ACHN (cell line): ENCODE measurements at regions of chr10 and their contacts with region 1.

Region 1: DNA sequence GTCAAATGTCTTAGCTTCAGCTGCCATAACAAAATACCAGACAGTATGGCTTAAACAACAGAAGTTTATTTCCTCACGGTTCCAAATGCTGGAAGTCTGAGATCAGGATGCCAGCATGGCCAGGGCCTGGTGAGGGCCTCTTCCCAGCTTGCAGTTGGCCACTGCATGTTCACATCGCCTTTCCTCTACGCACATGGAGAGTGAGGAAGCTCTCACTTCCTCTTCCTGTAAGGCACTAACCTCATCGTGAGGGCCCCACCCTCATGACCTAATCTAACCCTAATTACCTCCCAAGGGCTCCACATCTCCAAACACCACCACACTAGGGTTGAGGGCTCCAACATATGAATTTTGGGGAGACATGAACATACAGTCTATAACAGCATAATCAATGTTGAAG is 14.4 kb downstream of the ZNF33B start:
- DNase-seq: no peak

Region 2: GRCh38 chr10:42782446-42783180 is 158.7 kb after region 1 on chr10 and contains the start of gene BMS1:
- in situ Hi-C with region 1: loop called (anchors 25 kb)
- DNase-seq: peak; percentile 96